Heart left ventricle (tissue), 16 donors: ENCODE measurements at regions of chr5 and their contacts with region 1.

Region 1: GRCh38 chr5:160439205-160439600 is 17.5 kb downstream of the PTTG1 start:
- DNase-seq: peak; percentile 76 to 91 (median 82)
- ATAC-seq: peak; percentile 82 to 97 (median 94)
- H3K4me3 ChIP-seq: peak overlapping the region; percentile 12 to 61 (median 44)
- H3K27ac ChIP-seq: peak overlapping the region in 1 of 12 donors; percentile 51
- H3K4me1 ChIP-seq: peaks cover 0 to 22% (median 6%) of the 10 kb centered on the region in 12 donors
- H3K27me3 ChIP-seq: peaks cover 0 to 3% (median 0%) of the 10 kb centered on the region in 9 donors
- CTCF ChIP-seq: peak in 11 of 12 donors; percentile 85 to 98 (median 93)
- POLR2A ChIP-seq: no peak

Region 2: DNA sequence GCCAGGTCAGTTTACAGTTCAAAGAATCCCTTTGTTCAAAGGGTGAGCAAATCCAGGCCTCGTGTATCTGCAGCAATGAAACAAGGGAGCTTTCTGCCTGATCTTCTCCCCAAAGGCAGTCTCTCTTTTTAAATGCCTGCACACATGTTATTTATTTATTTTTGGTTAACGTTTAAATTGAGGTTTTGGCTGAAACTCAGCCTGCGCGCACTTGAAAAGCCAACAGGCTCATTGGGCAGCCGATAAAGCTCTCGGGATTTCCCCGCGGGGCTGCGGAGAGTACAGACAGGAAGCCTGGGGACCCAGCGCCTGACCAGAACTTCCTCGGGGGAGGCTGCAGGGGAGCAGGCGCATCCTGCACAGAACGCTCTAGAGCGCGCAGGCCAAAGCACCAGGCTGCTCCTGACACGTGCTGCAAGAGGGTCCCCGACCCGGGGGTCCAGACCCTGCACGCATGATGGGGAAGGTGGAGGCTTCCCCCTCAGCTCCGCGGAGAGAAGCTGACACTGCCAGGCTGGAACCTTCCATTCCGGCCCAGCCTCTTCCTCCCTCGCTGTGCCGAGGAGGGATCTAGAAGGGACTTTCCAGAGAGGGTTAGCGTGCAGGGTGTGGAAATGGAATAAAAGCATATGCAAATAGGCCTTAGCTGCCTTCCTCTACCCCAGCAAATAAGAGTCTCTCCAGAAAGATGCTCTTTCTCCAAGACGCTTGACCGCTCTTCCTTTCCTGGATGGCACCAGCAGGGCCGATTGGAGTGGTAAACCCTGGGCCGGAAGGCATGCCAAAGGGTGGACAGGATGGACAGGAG is 28.6 kb after region 1 on chr5:
- intact Hi-C with region 1: loop called in 1 of 10 experiments (anchors 2 kb)
- DNase-seq: peak; percentile 70 to 90 (median 78)
- ATAC-seq: peak; percentile 46 to 89 (median 85)
- H3K4me3 ChIP-seq: peak overlapping the region in 11 of 12 donors; percentile 2 to 56 (median 40)
- H3K27ac ChIP-seq: peak overlapping the region in 9 of 12 donors; percentile 34 to 83 (median 47)
- H3K4me1 ChIP-seq: peaks cover 0 to 63% (median 26%) of the 10 kb centered on the region in 12 donors
- H3K27me3 ChIP-seq: no peaks in the 10 kb centered on the region
- CTCF ChIP-seq: no peak
- POLR2A ChIP-seq: no peak

Region 3: GRCh38 chr5:160508780-160509361 is 69.7 kb after region 1 on chr5:
- intact Hi-C with region 1: loop called in 5 of 10 experiments (anchors 2 to 10 kb)
- DNase-seq: peak in 4 of 5 donors; percentile 35 to 55 (median 42)
- ATAC-seq: peak; percentile 65 to 80 (median 74)
- H3K4me3 ChIP-seq: no peak overlapping the region
- H3K27ac ChIP-seq: no peak overlapping the region
- H3K4me1 ChIP-seq: peaks cover 0 to 33% (median 0%) of the 10 kb centered on the region in 12 donors
- H3K27me3 ChIP-seq: peaks cover 0 to 8% (median 0%) of the 10 kb centered on the region in 9 donors
- CTCF ChIP-seq: peak; percentile 79 to 90 (median 84)
- POLR2A ChIP-seq: no peak

Region 4: GRCh38 chr5:160573318-160573717 is 134.1 kb after region 1 on chr5:
- intact Hi-C with region 1: no loop called
- DNase-seq: no peak
- ATAC-seq: no peak
- H3K4me3 ChIP-seq: no peak overlapping the region
- H3K27ac ChIP-seq: no peak overlapping the region
- H3K4me1 ChIP-seq: no peaks in the 10 kb centered on the region
- H3K27me3 ChIP-seq: no peaks in the 10 kb centered on the region
- CTCF ChIP-seq: no peak
- POLR2A ChIP-seq: no peak